PC-3 (cell line): ENCODE measurements at regions of chr12 and their contacts with region 1.

Region 1: DNA sequence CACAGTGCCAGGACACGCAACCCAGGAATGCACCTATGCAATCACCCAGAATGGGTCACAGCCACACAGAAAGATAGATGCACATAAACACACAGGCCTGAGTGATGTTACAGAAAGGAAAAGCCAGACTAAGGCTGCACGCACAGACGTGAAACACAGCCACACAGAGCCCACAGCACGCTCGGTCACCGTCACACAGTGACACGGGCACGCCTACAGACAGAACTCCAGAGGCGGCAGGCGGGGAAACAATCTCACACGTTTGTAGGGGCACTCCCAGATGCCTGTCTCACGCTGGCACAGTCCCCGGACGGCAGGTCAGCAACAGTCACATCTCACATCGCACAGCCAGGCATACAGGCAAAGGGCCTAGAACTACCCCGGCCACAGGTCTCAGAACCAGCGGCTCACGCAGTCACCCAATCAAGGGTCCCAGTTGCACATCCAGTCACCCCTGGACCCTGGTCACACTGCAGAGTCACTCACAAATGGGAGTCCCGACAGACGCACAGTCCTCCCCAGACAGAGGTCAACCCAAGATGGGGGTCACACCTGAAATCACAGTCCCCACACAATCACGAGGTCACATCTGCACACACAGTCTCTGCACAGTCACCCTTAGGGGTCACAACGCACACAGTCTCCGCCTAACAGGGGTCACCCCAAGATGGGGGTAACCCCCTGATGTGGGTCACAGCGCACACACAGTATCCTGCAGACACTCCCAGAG is 790 bp downstream of the SSH1 start:
- DNase-seq: peak; percentile 72
- ATAC-seq: peak; percentile 59
- H3K4me3 ChIP-seq: peak overlapping the region; percentile 82
- H3K27ac ChIP-seq: peak overlapping the region; percentile 88
- H3K4me1 ChIP-seq: peaks cover 29% of the 10 kb centered on the region
- H3K27me3 ChIP-seq: no peaks in the 10 kb centered on the region
- CTCF ChIP-seq: no peak

Region 2: GRCh38 chr12:108731105-108731865 is 125.3 kb before region 1 on chr12 and contains the start of gene CORO1C:
- CTCF ChIA-PET with region 1: no interaction called
- POLR2A ChIA-PET with region 1: interaction called, 5 read pairs
- intact Hi-C with region 1: loop called (anchors 5 kb)
- DNase-seq: peak; percentile 99
- ATAC-seq: peak; percentile 53
- H3K4me3 ChIP-seq: peak within 1 kb of the TSS; percentile 68
- H3K27ac ChIP-seq: peak within 1 kb of the TSS; percentile 87
- H3K4me1 ChIP-seq: peaks cover 57% of the 10 kb centered on the region
- H3K27me3 ChIP-seq: no peaks in the 10 kb centered on the region
- CTCF ChIP-seq: peak; percentile 83
- total RNA-seq, gene CORO1C: 159 and 179 TPM in 2 replicates

Region 3: GRCh38 chr12:108838194-108839017 is 18.2 kb before region 1 on chr12:
- CTCF ChIA-PET with region 1: no interaction called
- POLR2A ChIA-PET with region 1: no interaction called
- intact Hi-C with region 1: loop called (anchors 2 kb)
- DNase-seq: peak; percentile 99
- ATAC-seq: peak; percentile 97
- H3K4me3 ChIP-seq: peak overlapping the region; percentile 23; the same call in 1 of the 2 replicates
- H3K27ac ChIP-seq: peak overlapping the region; percentile 92
- H3K4me1 ChIP-seq: peaks cover 36% of the 10 kb centered on the region
- H3K27me3 ChIP-seq: no peaks in the 10 kb centered on the region
- CTCF ChIP-seq: no peak